ENCODE measurements at regions of chr11 and their contacts with region 1.

Region 1: GRCh38 chr11:57530596-57531507 is at the start of gene TIMM10:
- DNase-seq: peak; percentile 91 to 99 (median 96)

Region 2: DNA sequence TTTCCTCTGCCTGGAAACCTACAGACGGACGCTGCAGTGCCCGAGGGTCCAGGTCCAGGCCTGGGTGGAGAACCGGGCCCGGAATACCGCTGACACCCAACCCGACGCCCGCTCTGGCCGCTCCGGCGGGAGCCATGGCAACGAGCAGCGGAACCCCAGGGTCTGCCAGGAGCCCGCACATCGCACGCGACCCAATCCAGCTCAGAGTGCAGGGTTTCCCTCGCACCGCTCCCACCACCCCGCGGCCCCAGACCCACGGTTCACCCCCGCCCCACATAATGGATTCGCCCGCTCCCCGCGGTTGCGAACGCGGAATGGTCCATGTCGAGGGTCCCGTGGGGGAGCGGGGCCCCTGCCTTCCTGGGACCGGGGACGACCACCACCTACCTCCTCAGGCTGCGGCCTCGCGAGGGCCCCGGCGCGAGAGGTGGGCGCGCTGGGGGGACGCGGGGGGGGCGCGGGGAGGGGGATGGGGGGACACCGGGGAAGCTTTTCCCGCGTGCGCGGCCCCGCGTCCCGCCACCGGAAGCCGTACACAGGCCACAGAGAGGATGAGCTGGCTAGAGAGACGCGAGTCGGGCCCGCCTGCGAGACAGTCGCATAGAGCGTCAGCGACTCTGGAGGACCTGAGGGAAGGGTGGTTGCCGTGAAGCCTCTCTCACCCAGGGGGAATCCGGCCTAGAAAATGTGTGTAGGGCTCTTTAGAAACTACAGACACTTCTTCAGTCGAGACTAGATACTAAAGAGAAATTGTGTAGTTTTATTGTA is 195.3 kb before region 1 on chr11 and contains the start of gene SSRP1:
- intact Hi-C with region 1: loop called (anchors 5 kb)
- DNase-seq: peak; percentile 80 to 99 (median 92)

Region 3: GRCh38 chr11:57345555-57346211 is 185.2 kb before region 1 on chr11:
- intact Hi-C with region 1: loop called (anchors 5 kb)
- DNase-seq: peak; percentile 34 to 93 (median 72)

Region 4: GRCh38 chr11:57406337-57406904 is 124.4 kb before region 1 on chr11:
- intact Hi-C with region 1: no loop called
- DNase-seq: no peak

Region 5: DNA sequence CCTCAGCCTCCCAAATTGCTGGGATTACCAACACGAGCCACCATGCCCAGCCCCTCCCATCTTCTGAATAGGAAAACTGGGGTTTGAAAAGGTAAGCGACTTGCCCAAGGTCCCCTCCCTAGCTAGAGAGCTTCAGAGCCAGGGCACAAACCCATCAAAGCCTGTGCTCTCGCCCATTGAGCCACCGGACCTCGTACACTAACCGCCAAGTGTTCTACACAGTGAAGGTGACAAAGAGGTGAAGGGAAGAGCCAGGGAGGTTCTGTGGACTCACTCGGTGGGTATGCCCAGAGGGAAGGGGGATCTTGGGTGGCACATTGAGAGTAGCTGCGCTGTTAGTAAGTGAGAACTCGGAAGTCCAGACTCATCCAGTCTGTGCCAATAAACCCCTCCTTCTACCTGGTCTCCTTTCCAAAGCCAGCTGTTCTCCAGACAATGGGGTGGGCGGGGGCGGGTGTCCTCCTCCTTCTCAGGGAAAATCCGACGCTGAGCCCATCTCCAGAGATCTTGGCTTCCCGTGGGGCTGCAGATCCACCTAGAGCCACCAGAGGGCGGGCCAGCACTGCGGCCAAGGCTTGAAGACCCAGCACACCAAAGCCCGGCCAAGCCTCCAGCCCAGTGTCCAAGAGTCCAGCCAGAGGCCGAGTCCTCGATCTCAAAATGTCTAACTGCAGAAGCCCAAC is 73.8 kb before region 1 on chr11:
- intact Hi-C with region 1: loop called (anchors 1 kb)
- DNase-seq: peak; percentile 78 to 98 (median 90)

Region 6: DNA sequence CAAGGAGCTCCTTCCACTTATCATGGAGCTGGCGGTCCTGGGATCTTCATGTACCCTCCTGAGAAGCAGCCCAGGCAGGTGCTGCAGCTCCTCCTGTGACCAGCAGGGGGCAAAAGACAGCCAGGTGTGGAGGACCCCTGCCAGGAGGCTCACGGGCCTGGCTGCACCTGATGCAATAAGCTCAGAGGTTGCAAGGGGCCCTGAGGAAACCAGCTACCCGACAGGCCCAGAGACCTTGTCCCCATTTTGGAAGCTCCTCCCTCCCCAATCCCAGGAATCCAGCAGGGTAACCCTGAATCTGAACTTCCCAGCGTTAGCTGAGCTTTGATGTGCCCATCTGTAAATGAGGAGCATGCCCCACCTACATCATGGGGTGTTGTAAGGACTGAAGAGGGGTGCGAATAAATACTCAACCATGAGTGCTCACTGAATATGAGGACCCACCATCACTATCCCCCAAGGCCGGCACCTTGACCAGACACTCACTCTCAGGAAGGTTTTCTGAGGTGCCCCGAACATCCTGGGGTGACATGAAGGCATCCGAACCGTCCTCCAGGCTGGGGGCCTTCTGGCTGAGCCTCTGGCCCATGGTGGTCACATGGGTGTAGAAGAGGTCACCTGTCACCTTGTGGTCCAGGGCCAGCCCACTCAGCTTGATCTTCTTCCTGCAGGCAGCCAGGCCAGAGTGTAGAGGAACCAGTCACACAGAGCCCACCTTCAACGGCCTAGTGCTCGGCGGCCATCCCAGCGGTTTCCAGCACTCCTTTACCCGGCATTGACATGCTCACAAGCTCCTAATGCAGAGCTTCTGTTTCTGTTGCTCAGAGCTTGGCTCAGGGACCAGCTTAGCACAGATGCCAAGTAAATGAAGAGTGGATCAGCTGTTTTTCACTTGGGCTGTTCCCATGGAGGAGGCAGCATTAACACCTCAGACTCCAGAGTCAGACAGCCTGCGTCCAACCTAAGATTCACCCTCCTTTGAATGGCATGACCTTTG is 37.0 kb before region 1 on chr11:
- intact Hi-C with region 1: loop called (anchors 2 kb)
- DNase-seq: peak in 6 of 10 donors; percentile 41 to 89 (median 48)

Region 7: GRCh38 chr11:57567515-57568329 is 36.9 kb after region 1 on chr11 and contains the start of gene UBE2L6:
- intact Hi-C with region 1: loop called (anchors 5 kb)
- DNase-seq: peak; percentile 51 to 96 (median 80)